HEK293T (cell line): ENCODE measurements at regions of chrX and their contacts with region 1.

Region 1: GRCh38 chrX:149950681-149951080 is 12.4 kb upstream of the EOLA2 start:
- DNase-seq: peak; percentile 51

Region 2: GRCh38 chrX:149807747-149808458 is 142.8 kb before region 1 on chrX:
- CTCF ChIA-PET with region 1: no interaction called
- POLR2A ChIA-PET with region 1: no interaction called
- DNase-seq: no peak

Region 3: GRCh38 chrX:149939796-149940673 is 10.6 kb before region 1 on chrX:
- CTCF ChIA-PET with region 1: interaction called, 10 read pairs
- POLR2A ChIA-PET with region 1: no interaction called
- DNase-seq: peak; percentile 83

Region 4: DNA sequence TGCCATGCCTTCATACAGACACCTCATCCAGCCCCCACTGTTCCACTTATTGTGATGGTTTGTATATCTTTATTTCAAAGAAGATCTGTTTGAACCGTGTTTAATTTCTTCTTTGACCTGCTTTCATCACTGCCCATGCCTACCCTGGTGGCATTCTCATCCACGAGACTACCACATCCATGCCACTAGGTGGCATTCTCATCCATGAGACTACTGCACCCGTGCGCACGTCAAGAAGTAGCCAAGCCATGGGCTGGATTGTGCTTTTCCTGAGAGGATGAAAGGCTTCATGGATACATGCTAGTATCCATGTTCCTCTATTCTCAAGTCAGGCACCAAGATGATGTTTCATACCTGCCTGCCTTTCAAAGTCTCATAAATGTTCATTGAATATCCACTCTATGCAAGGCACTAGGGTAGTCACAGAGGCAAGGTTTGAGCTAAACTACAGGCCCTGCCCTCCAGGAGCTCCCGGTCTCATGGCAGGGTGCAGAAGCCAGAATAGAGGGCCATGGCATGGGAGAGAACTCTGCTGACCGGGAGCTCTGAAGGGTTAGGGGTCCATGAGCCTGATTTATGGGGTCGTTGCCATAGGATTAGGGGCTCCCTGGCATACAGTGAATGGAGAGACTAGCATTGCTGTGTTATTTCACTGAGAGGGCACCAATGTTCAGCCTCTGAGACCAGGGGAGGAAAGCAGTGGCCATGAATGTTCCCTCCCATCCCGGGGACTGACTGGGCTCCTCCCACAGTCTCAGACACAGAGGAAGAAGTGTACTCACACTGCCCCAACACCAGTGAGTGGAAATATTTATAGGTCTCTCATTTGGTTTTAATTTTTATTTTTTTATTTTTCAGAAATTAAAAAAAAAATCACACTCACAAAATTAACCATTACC is 12.4 kb after region 1 on chrX:
- CTCF ChIA-PET with region 1: no interaction called
- POLR2A ChIA-PET with region 1: no interaction called
- DNase-seq: peak; percentile 67